Ovary (tissue), 10 donors: ENCODE measurements at regions of chr19 and their contacts with region 1.

Region 1: DNA sequence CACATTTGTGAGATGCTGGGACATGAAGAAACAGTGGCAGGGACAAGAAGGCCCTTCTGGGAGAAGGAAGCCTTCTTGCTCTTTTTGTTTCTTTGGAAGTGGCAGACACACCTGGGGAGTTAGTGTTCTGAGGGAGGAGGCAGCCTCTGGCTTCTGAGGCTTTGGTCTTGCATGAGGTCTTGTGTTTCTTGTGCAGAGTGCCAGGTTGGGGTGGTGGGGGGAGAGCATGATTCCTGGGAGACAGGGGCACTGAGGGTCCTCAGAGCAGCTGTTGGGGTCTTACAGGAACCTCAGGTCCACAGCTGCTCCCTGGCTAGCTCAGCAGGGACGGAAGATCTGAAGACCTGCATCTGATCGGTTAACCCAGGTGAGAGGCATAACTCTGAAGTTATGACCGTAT is 167.5 kb upstream of the ZNF536 start:
- DNase-seq: no peak
- H3K4me3 ChIP-seq: no peak overlapping the region
- H3K27ac ChIP-seq: no peak overlapping the region
- H3K4me1 ChIP-seq: no peaks in the 10 kb centered on the region
- H3K27me3 ChIP-seq: no peaks in the 10 kb centered on the region
- CTCF ChIP-seq: no peak
- EP300 ChIP-seq: no peak
- POLR2A ChIP-seq: no peak

Region 2: DNA sequence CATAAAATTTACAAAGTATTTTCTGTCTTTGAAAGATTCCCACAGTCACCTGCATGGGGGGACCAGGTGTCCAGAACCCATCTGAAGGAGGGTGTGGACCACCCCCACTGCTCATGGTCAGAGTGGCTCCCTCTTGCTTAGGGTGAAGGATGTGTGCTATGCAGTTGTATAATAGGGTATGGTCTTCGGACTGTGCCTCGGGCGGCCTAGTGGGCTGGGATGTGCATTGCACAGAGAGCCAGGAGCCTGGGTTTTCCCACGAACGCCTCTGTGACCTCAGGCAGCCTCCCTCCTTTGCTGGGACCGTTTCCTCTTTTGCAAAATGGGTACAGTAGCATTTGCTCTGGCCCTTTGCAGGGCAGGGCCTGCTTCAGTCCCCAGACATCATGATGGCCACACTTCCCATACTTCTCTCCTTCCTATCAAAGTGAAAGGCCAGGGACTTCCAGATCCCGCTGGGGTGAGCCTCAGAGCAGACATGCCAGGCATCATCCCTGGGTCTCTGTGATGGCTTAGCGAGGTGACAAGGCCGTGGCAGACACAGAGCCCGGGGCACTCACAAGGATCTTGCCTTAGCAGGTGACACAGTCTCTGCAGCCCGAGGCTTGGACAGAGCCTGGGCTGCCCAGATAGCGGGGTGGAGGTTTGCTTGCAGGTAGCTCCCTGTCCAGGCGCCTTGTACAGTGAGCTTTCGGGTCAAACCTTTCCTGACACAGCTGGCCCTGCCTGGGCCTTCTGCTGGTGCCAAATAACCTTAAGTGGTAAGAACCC is 108.0 kb after region 1 on chr19:
- intact Hi-C with region 1: no loop called
- DNase-seq: no peak
- H3K4me3 ChIP-seq: no peak overlapping the region
- H3K27ac ChIP-seq: no peak overlapping the region
- H3K4me1 ChIP-seq: no peaks in the 10 kb centered on the region
- H3K27me3 ChIP-seq: no peaks in the 10 kb centered on the region
- CTCF ChIP-seq: no peak
- EP300 ChIP-seq: no peak
- POLR2A ChIP-seq: no peak

Region 3: DNA sequence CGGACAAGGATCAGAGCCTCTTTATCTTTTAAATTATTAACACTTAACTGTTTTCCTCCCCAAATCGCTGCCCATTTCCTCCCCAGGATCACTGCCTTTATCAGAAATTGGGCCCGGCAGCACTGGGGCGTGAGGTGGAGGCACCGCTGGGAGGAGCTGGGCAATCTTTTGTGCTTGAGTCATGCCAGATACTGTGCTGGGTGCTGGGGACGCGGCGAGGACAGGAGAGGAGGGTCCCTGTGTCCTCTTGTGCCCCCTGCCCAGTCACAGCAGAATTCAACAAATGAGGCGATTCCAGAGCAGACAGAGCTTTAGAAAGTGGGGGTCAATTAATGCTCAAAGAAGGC is 515.3 kb after region 1 on chr19:
- intact Hi-C with region 1: loop called in 1 of 4 experiments (anchors 10 kb)
- DNase-seq: peak in 3 of 5 donors; percentile 21 to 37 (median 32)
- H3K4me3 ChIP-seq: peak overlapping the region; percentile 58
- H3K27ac ChIP-seq: peak overlapping the region; percentile 62 to 82
- H3K4me1 ChIP-seq: no peaks in the 10 kb centered on the region
- H3K27me3 ChIP-seq: no peaks in the 10 kb centered on the region
- CTCF ChIP-seq: no peak
- EP300 ChIP-seq: no peak
- POLR2A ChIP-seq: no peak